ENCODE measurements at regions of chr3 and their contacts with region 1.

Region 1: DNA sequence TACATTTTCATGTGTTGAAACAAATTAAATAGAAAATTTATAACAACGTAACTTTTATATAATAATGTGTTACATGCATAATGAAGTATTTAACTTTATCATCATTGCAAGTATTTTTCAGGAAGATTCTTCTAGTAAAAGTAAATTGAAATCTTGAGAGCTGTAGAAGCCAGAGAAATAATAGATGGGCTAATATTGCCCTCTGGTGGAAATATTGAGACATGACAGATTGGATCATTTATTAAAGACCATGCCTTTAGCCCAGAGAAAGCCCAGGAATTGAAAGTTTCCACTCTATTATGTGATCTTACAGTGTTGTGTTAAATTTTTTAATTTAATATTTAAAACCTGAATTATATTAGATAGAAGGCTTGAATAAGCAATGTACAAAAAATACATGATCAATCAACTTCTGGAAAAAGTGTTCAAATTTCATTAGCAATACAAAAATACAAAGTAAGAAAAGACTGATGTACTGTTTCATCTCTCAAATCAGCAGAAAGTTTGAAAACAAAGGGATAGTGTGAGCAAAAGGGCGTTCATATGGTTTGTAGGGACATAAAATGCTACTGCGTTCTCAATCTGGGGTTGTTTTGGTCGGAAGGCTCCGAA is 52.7 kb upstream of the SPTSSB start:
- DNase-seq: no peak
- ATAC-seq: no peak
- H3K4me3 Mint-ChIP-seq: no peak overlapping the region
- H3K27ac Mint-ChIP-seq: no peak overlapping the region
- H3K4me1 Mint-ChIP-seq: no peaks in the 10 kb centered on the region
- H3K27me3 Mint-ChIP-seq: no peaks in the 10 kb centered on the region

Region 2: GRCh38 chr3:160707187-160707794 is 716.7 kb before region 1 on chr3:
- CTCF ChIA-PET with region 1: interaction called, 3 read pairs
- POLR2A ChIA-PET with region 1: no interaction called
- intact Hi-C with region 1: loop called (anchors 1 to 10 kb)
- DNase-seq: peak; percentile 44
- ATAC-seq: peak; percentile 60
- H3K4me3 Mint-ChIP-seq: no peak overlapping the region
- H3K27ac Mint-ChIP-seq: no peak overlapping the region
- H3K4me1 Mint-ChIP-seq: no peaks in the 10 kb centered on the region
- H3K27me3 Mint-ChIP-seq: peaks cover 21% of the 10 kb centered on the region

Region 3: DNA sequence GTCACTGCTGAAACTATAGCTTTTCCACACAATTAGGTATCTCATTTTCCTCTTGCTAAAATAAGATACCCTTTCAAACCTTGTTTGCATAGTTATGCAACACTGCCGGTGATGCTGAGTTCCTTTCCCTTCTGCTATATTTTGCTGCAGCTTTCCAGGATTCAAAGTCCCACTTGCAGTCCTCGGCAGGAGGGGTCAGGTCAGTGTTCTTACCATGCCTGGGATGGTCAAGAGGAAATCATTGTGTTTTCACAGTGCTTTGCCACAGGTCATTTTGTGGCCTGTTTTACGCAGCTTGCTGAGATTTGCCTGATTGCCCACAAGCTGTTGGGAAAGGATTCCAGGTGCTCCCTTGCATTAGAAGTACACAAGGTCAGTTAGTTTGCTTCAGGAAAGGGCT is 475.7 kb before region 1 on chr3:
- CTCF ChIA-PET with region 1: no interaction called
- POLR2A ChIA-PET with region 1: no interaction called
- intact Hi-C with region 1: loop called (anchors 2 to 5 kb)
- DNase-seq: no peak
- ATAC-seq: no peak
- H3K4me3 Mint-ChIP-seq: no peak overlapping the region
- H3K27ac Mint-ChIP-seq: no peak overlapping the region
- H3K4me1 Mint-ChIP-seq: peaks cover 8% of the 10 kb centered on the region
- H3K27me3 Mint-ChIP-seq: peaks cover 4% of the 10 kb centered on the region

Region 4: DNA sequence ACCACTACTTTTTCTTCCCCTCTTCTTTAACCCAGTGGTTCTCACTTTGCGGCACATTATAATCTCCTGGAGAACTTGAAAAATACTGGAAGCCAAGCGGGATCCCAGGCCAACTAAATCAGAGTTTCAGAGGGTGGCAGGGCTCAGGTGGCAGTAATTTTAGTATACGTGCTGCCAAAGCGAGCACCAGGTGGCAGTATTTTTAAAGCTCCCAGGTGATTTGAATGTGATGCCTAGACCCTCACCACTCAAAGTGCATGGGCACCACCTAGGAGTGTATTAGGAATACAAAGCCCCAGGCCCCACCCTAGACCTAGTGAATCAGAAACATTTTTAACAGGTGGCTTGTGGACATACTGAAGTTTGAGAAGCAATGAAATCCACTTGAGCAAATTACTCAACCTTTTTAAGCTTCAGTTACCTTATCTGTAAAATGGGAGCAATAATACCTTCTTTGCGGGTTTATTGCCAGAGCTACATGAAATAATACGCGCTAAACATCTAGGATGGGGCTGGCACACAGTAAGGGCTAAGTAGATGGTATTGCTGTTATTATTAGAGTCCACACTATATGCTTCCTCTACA is 327.2 kb before region 1 on chr3:
- CTCF ChIA-PET with region 1: interaction called, 3 read pairs
- POLR2A ChIA-PET with region 1: no interaction called
- intact Hi-C with region 1: loop called (anchors 1 to 2 kb)
- DNase-seq: peak; percentile 36
- ATAC-seq: no peak
- H3K4me3 Mint-ChIP-seq: no peak overlapping the region
- H3K27ac Mint-ChIP-seq: no peak overlapping the region
- H3K4me1 Mint-ChIP-seq: no peaks in the 10 kb centered on the region
- H3K27me3 Mint-ChIP-seq: no peaks in the 10 kb centered on the region

Region 5: GRCh38 chr3:161314836-161315401 is 109.1 kb before region 1 on chr3:
- CTCF ChIA-PET with region 1: no interaction called
- POLR2A ChIA-PET with region 1: no interaction called
- intact Hi-C with region 1: no loop called
- DNase-seq: no peak
- ATAC-seq: no peak
- H3K4me3 Mint-ChIP-seq: no peak overlapping the region
- H3K27ac Mint-ChIP-seq: no peak overlapping the region
- H3K4me1 Mint-ChIP-seq: peaks cover 46% of the 10 kb centered on the region
- H3K27me3 Mint-ChIP-seq: peaks cover 4% of the 10 kb centered on the region